GM10248 (cell line): ENCODE measurements at regions of chrX and their contacts with region 1.

Region 1: DNA sequence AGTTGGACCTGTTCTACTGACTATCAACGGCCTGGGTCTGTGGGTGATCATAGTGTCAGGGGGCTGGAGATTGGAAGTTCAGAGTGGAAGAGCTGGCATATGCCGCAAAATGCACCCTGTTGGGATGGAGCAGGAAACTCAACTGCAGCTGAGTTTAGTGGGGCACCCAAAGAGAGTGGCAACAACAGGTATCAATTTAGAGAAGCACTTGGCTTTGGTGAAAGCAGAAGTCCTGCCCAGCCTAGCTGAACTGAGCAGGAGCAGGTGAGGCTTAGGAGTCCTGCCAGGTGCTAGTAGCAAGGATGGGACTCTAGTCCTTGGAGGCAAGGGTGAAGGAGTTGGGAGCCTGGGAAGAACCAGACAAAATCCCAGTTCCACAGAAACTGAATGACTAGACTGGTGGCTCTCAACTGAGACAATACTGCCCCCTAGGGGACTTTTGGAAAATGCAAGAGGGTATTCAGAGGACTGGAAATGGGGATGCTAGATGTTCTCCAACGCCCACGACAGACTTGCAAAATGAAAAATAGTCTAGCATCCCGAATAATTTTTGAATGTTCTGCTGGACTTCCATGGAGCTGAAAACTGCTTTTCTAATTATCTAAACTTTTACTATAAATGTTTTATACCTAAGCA is 49.4 kb downstream of the RTL9 start:
- DNase-seq: peak; percentile 31
- CTCF ChIP-seq: peak; percentile 47

Region 2: GRCh38 chrX:110418316-110419235 is 10.5 kb after region 1 on chrX:
- CTCF ChIA-PET with region 1: interaction called, 13 read pairs
- POLR2A ChIA-PET with region 1: no interaction called
- DNase-seq: no peak
- CTCF ChIP-seq: no peak

Region 3: DNA sequence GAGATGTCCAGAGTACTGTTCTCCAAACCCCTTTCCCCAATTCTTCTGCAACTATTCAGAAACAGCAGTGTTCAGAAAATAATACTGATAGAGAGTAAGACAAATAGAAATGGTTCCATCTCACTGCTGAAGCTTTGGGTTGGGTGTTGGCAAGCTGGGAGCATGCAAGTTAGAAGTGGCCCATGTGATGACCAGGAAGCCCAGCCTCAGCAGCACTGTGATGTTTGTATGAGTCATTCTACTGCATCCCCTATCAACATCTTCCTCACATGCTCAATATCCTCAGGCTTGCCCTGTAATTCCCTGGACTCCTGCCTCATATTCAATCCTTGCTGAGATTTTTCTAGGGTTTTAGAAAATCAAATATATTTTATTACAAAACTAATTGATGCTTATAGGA is 291.1 kb after region 1 on chrX:
- CTCF ChIA-PET with region 1: no interaction called
- POLR2A ChIA-PET with region 1: no interaction called
- DNase-seq: no peak
- CTCF ChIP-seq: no peak